Activated T-helper 1 cell treated with anti-CD3 and anti-CD28 coated beads, Interleukin-12 subunit alpha, Interleukin-12 subunit beta, Interleukin-2, Interleukin-4 antibody, amounts not matched to agents 30 ng/mL and 10 ng/mL and 1 ng/mL, durations not matched to agents 14 hours and 24 hours and 36 hours (primary cell): ENCODE measurements at regions of chr1 and their contacts with region 1.

Region 1: GRCh38 chr1:55284852-55285251 is 69.7 kb upstream of the USP24 start:
- DNase-seq: no peak
- H3K4me3 Mint-ChIP-seq: no peak overlapping the region
- H3K27ac Mint-ChIP-seq: no peak overlapping the region
- H3K4me1 Mint-ChIP-seq: peaks cover 14% of the 10 kb centered on the region
- H3K27me3 Mint-ChIP-seq: peaks cover 12% of the 10 kb centered on the region

Region 2: DNA sequence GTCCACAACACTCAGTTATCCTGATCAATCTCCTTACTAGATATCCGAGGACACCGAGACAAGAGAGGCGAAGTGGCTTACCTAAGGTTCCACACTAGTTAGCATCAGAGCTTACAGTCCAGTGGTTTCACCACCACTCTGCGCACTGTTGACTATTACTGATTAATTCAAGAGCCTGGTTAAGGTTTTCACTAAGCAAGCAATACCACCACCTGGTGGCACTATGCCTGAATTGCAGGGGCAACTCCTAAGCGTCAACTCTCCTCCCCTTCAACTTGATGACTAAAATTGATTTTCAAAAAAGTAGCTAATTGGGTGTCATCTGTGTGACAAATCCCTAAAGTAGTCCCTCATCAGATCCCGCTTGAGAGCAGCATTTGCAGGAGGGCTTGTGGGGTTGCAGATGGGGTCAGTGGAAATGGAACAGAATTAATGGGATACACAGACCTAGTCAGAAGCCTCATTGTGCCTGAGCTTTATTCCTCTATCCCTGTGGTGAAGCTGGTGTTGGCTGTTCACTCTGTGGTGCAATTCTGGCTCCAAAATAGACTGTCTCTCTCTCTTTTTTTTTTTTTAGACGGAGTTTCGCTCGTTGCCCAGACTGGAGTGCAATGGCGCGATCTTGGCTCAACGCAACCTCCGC is 492.9 kb before region 1 on chr1:
- intact Hi-C with region 1: no loop called
- DNase-seq: no peak
- H3K4me3 Mint-ChIP-seq: no peak overlapping the region
- H3K27ac Mint-ChIP-seq: no peak overlapping the region
- H3K4me1 Mint-ChIP-seq: peaks cover 24% of the 10 kb centered on the region
- H3K27me3 Mint-ChIP-seq: no peaks in the 10 kb centered on the region

Region 3: GRCh38 chr1:55337801-55338447 is 53.1 kb after region 1 on chr1:
- intact Hi-C with region 1: loop called (anchors 1 kb)
- DNase-seq: peak; percentile 2
- H3K4me3 Mint-ChIP-seq: no peak overlapping the region
- H3K27ac Mint-ChIP-seq: no peak overlapping the region
- H3K4me1 Mint-ChIP-seq: peaks cover 6% of the 10 kb centered on the region
- H3K27me3 Mint-ChIP-seq: peaks cover 2% of the 10 kb centered on the region

Region 4: DNA sequence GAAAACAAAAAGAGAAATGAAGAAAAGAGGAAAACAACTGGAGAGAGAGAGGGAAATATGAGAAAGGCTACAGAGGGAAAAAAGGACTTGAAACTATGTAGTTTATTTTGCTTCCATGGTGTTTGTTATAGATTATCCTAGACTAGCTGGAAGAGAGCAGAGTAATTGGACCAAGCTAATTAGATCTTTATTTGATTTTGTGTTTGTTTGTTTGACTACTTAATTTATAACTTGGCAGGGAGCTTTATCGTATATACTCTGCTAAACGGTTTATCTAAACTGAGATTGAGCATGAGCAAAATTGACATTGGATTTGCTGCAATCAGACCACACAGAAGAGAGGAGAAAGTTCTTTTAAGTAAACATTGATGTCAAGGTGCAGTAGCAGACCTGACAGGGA is 374.1 kb after region 1 on chr1:
- intact Hi-C with region 1: no loop called
- DNase-seq: no peak
- H3K4me3 Mint-ChIP-seq: no peak overlapping the region
- H3K27ac Mint-ChIP-seq: no peak overlapping the region
- H3K4me1 Mint-ChIP-seq: no peaks in the 10 kb centered on the region
- H3K27me3 Mint-ChIP-seq: no peaks in the 10 kb centered on the region

Region 5: DNA sequence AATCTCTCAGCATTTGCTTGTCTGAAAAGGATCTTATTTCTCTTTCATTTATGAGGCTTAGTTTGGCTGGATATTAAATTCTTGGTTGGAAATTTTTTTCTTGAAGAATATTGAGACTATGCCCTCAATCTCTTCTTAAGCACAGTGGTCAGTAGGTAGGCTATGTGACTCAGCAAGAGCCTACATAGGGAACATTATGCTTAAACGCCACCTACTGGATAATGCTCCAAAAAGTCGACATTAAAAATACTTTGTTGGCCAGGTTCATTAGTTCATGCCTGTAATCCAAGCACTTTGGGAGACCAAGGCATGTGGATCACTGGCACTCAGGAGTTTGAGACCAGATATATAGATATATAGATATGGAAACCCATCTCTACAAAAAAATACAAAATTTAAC is 608.3 kb after region 1 on chr1:
- intact Hi-C with region 1: loop called (anchors 5 kb)
- DNase-seq: no peak
- H3K4me3 Mint-ChIP-seq: no peak overlapping the region
- H3K27ac Mint-ChIP-seq: no peak overlapping the region
- H3K4me1 Mint-ChIP-seq: no peaks in the 10 kb centered on the region
- H3K27me3 Mint-ChIP-seq: peaks cover 2% of the 10 kb centered on the region

Region 6: GRCh38 chr1:56821140-56821797 is 1536.4 kb after region 1 on chr1:
- intact Hi-C with region 1: loop called (anchors 5 kb)
- DNase-seq: peak; percentile 52
- H3K4me3 Mint-ChIP-seq: no peak overlapping the region
- H3K27ac Mint-ChIP-seq: no peak overlapping the region
- H3K4me1 Mint-ChIP-seq: no peaks in the 10 kb centered on the region
- H3K27me3 Mint-ChIP-seq: peaks cover 5% of the 10 kb centered on the region